Right cardiac atrium (tissue), 5 donors: ENCODE measurements at regions of chr11 and their contacts with region 1.

Region 1: DNA sequence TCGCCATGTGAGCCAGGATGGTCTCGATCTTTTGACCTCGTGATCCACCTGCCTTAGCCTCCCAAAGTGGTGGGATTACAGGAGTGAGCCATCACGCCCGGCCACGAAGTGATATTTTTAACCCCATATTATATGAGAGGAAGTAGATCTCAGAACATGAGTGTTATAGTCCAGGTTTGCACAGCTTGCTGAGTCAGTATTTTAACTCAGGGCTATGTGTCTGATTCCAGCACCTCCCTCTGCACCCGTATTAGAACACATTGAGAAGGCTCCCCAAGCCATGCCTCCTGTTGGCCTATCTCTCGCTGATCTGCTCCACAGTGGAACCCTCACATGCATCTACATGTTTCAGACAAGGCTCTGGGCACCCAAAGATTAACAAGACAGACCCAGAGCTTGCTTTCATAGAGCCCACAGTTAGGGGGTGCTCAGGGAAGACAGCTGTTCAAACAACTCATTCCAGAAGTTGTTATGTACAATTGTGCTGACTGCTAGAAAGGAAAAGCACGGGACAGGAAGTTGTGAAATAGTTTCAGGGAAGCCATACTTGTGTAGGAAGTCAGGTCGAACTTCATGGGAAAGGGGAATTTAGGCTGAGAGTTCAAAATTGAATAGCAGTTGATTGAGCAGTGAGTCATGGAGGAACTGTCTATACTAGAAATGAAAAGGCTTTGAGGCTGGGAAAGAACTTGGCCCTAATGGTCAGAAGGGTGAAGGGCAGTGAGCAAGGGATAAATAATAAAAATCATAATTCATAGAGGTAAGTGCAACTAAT is 49.3 kb upstream of the CLPB start:
- DNase-seq: no peak
- ATAC-seq: peak; percentile 47 to 55
- H3K4me3 ChIP-seq: no peak overlapping the region
- H3K27ac ChIP-seq: no peak overlapping the region
- H3K4me1 ChIP-seq: no peaks in the 10 kb centered on the region
- H3K27me3 ChIP-seq: peaks cover 2% of the 10 kb centered on the region

Region 2: DNA sequence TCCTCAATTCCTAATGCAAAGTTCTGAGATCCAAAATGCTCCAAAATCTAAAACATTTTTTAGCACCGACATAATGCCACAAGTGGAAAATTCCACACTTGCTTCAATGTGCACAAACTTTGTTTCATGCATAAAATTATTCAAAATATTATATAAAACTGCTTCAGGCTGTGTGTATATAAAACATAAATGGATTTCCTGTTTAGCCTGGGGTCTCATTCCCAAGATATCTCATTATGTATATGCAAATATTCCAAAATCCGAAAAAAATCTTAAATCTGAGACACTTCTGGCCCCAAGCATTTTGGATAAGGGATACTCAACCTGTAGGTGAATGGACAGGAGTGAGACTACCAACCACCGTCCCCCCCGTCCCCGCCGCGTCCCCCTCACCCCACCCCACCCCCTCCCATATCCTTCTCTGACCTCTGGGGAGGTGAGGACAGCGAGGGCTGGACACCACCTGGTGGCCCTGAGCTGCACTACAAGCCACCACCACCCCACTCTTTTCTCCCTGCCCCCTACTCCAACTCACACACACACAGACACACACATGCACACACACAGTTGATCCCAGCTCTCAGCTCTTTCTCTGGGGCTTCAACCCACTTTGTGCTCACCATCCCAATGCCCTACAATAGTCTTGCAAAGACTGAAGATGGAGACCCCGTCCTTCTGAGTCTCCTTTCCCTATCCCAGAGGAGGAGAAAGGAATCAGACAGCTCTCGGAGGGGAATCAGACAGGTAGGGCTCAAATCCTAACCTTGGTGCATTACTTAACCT is 89.7 kb after region 1 on chr11:
- intact Hi-C with region 1: loop called (anchors 5 to 10 kb)
- DNase-seq: peak in 2 of 3 donors; percentile 31 to 71
- ATAC-seq: peak; percentile 36 to 73
- H3K4me3 ChIP-seq: no peak overlapping the region
- H3K27ac ChIP-seq: no peak overlapping the region
- H3K4me1 ChIP-seq: no peaks in the 10 kb centered on the region
- H3K27me3 ChIP-seq: no peaks in the 10 kb centered on the region

Region 3: DNA sequence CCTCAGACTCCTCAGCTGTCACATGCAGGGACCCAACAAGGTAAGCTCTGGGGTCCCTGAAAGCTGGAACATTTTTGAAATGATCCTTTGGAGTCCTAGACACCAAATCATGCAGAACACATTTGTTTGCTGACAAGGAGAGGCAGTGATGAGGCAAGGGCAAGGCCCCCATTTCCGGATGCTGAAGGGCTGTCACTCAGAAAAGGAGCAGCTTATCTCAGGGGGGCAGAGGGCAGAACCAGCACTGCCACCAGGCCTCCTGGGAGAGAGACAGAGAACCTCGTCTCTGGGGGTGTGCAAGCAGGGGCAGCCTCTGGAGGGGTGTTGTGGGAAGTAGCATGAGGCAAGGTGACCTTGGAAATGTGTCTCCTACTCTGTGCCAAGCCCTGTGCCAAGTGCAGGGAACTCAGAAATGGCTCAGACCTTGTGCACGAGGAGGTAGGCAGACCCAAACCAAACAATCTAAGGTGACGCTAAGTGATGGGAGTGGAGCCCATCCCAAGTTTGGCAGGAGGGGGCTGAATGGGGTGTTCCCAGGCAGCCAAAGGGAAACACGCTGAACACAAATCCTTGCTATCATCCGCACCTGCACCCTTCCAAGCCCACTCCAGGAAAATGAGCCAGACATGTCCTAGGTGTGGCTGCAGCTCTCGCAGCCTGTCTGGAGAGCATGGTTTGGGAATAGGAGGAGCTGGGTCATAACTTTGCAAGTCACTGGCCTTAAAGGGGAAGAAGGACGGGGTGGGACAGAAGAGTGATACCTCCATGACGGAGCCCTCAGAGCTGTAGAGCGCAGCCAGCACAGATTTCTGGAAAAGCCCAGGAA is 96.4 kb after region 1 on chr11:
- intact Hi-C with region 1: loop called in 2 of 4 experiments (anchors 5 to 10 kb)
- DNase-seq: peak in 1 of 3 donors; percentile 22
- ATAC-seq: no peak
- H3K4me3 ChIP-seq: no peak overlapping the region
- H3K27ac ChIP-seq: no peak overlapping the region
- H3K4me1 ChIP-seq: no peaks in the 10 kb centered on the region
- H3K27me3 ChIP-seq: no peaks in the 10 kb centered on the region

Region 4: GRCh38 chr11:72772978-72773690 is 289.5 kb after region 1 on chr11:
- intact Hi-C with region 1: no loop called
- DNase-seq: peak; percentile 59 to 78 (median 78)
- ATAC-seq: peak; percentile 79 to 83
- H3K4me3 ChIP-seq: no peak overlapping the region
- H3K27ac ChIP-seq: peak overlapping the region; percentile 65
- H3K4me1 ChIP-seq: peaks cover 23% of the 10 kb centered on the region
- H3K27me3 ChIP-seq: no peaks in the 10 kb centered on the region